ENCODE measurements at regions of chr20 and their contacts with region 1.

Region 1: DNA sequence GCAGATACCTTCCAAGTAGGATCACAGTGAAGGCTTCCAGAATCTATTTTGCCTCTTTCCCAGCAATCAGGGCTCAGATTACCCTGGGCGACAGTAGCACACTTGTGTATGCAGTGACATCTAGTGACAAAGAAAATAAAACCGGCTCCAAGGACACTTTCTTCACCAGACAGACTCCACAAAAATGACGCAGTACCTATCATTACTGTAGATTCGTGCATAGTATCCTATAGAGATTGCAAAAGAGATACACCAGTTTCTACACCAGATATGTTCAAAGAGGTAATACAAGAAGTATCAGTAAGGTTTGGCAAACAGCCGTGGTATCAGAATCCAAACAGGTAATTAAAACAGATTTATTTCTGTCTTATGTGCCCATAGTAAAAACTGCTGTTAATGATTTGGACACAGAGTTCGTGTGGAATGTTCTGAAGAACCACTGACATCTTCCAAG is 600.4 kb upstream of the JAG1 start:
- DNase-seq: peak; percentile 14 to 18
- ATAC-seq: peak; percentile 85 to 95
- H3K4me3 ChIP-seq: no peak overlapping the region
- H3K27ac ChIP-seq: no peak overlapping the region
- H3K4me1 ChIP-seq: peaks cover 0 to 6% of the 10 kb centered on the region in 2 donors
- H3K27me3 ChIP-seq: no peaks in the 10 kb centered on the region
- CTCF ChIP-seq: peak; percentile 26 to 67 (median 44)
- POLR2A ChIP-seq: no peak

Region 2: GRCh38 chr20:10469599-10469998 is 804.6 kb before region 1 on chr20:
- in situ Hi-C with region 1: loop called in 1 of 4 experiments (anchors 10 kb)
- intact Hi-C with region 1: loop called (anchors 1 kb)
- DNase-seq: peak in 1 of 2 donors; percentile 20
- ATAC-seq: peak; percentile 58 to 82
- H3K4me3 ChIP-seq: no peak overlapping the region
- H3K27ac ChIP-seq: no peak overlapping the region
- H3K4me1 ChIP-seq: peaks cover 10 to 33% of the 10 kb centered on the region in 2 donors
- H3K27me3 ChIP-seq: no peaks in the 10 kb centered on the region
- CTCF ChIP-seq: peak; percentile 34 to 59 (median 41)
- POLR2A ChIP-seq: no peak

Region 3: DNA sequence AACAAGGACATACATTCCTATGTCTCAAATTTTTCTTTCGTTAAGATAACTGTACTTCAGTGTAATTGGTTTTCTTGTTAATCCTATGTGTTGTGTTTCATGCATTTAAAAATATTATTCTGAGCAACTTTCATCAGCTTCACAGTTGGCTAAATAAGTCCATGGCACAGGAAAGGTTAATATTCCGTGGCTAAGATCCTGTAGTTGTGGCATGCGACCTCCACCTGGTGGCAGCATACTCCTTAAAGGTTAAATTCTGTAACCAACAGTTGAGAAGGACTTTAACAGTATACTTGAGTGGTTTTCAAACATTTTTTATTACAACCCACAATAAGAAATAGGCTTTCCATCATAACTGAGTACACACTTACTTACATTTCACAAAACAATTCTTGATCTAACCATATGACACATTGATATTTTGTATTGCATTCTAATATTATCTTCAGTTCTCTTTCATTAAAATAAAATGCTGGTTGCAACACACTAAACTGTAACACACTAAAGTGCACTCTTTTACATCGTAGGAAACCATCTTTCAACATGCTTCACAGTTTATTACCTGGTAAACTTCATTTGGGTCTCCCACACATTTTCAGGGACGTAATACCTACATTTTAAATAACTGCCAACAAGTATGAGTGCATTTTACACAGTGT is 720.7 kb before region 1 on chr20:
- in situ Hi-C with region 1: loop called in 3 of 4 experiments (anchors 5 to 10 kb)
- intact Hi-C with region 1: loop called (anchors 1 kb)
- DNase-seq: peak; percentile 22 to 45
- ATAC-seq: peak; percentile 58 to 74
- H3K4me3 ChIP-seq: no peak overlapping the region
- H3K27ac ChIP-seq: no peak overlapping the region
- H3K4me1 ChIP-seq: no peaks in the 10 kb centered on the region
- H3K27me3 ChIP-seq: no peaks in the 10 kb centered on the region
- CTCF ChIP-seq: peak; percentile 63 to 79 (median 72)
- POLR2A ChIP-seq: no peak

Measured in gastrocnemius medialis (tissue), 4 donors.